Activated T-helper 2 cell treated with anti-CD3 and anti-CD28 coated beads, Interferon-gamma antibody, Interleukin-2, Interleukin-4, amounts not matched to agents 10 μg/mL and 5 μg/mL and 100 μg/mL, durations not matched to agents 14 hours and 24 hours and 36 hours (primary cell): ENCODE measurements at regions of chr20 and their contacts with region 1.

Region 1: DNA sequence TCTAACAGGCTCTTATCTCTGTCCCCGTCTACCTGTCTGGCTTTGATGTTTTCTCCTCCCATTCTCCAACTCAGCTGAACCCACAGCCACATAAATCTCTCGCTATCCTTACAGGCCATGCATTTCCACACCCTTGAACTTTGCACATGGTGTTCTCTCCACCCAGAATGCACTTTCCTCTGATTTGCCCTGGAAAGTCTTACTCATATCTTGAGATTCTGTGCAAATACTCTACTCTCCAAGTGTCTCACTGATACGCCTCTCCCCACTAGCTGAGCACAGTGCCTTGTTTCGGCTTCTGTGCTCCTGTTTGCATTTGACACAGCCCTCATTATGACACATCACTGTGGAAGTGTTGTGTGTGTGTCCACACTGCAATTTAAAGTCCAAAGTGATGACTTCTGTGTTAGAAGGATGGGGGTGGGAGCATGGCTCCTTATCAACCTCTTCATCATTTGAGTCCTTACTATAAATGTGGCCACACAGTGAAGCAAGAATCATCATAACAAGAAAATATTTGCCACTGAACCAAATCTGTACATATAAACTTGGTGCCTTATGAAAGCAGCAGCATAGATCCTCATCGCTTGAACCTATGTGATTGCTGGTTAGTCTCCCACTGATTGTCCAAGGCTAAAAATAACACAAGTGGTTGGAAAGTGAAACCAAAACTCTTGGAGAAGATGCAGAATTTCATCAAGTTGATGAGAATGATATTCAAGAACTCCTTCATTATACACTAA is 5.5 kb upstream of the PRELID3B start:
- DNase-seq: no peak
- H3K4me3 Mint-ChIP-seq: no peak overlapping the region
- H3K27ac Mint-ChIP-seq: peak overlapping the region; percentile 82
- H3K4me1 Mint-ChIP-seq: peaks cover 29% of the 10 kb centered on the region
- H3K27me3 Mint-ChIP-seq: peaks cover 17% of the 10 kb centered on the region

Region 2: GRCh38 chr20:59074445-59074844 is 26.3 kb after region 1 on chr20:
- intact Hi-C with region 1: loop called (anchors 1 kb)
- DNase-seq: no peak
- H3K4me3 Mint-ChIP-seq: no peak overlapping the region
- H3K27ac Mint-ChIP-seq: no peak overlapping the region
- H3K4me1 Mint-ChIP-seq: peaks cover 28% of the 10 kb centered on the region
- H3K27me3 Mint-ChIP-seq: peaks cover 21% of the 10 kb centered on the region